ENCODE measurements at regions of chr2 and their contacts with region 1.

Region 1: GRCh38 chr2:152335010-152335725 is at the start of gene FMNL2:
- DNase-seq: peak; percentile 24
- ATAC-seq: peak; percentile 90
- H3K4me3 ChIP-seq: peak within 1 kb of the TSS; percentile 76
- H3K27ac ChIP-seq: peak within 1 kb of the TSS; percentile 35; the same call in 1 of the 2 replicates
- H3K4me1 ChIP-seq: no peaks in the 10 kb centered on the region
- H3K27me3 ChIP-seq: no peaks in the 10 kb centered on the region
- CTCF ChIP-seq: 0 out of 6 replicates have a peak, but pooled peaks of 1 of the 3 experiments have one; percentile 5
- EP300 ChIP-seq: no peak
- POLR2A ChIP-seq: 0 out of 2 replicates have a peak, but pooled peaks have one; percentile 67
- RAD21 ChIP-seq: no peak
- polyA plus RNA-seq, gene FMNL2: 0.13 to 0.19 TPM

Region 2: GRCh38 chr2:152036611-152037469 is 298.3 kb before region 1 on chr2:
- CTCF ChIA-PET with region 1: no interaction called
- POLR2A ChIA-PET with region 1: no interaction called
- RAD21 ChIA-PET with region 1: no interaction called
- SMC1A ChIA-PET with region 1: no interaction called
- in situ Hi-C with region 1: loop called (anchors 10 kb)
- intact Hi-C with region 1: loop called (anchors 5 kb)
- DNase-seq: no peak
- ATAC-seq: peak; percentile 97
- H3K4me3 ChIP-seq: no peak overlapping the region
- H3K27ac ChIP-seq: no peak overlapping the region
- H3K4me1 ChIP-seq: no peaks in the 10 kb centered on the region
- H3K27me3 ChIP-seq: no peaks in the 10 kb centered on the region
- CTCF ChIP-seq: peak; percentile 78 to 89 (median 80)
- EP300 ChIP-seq: no peak
- POLR2A ChIP-seq: no peak
- RAD21 ChIP-seq: peak; percentile 99

Region 3: DNA sequence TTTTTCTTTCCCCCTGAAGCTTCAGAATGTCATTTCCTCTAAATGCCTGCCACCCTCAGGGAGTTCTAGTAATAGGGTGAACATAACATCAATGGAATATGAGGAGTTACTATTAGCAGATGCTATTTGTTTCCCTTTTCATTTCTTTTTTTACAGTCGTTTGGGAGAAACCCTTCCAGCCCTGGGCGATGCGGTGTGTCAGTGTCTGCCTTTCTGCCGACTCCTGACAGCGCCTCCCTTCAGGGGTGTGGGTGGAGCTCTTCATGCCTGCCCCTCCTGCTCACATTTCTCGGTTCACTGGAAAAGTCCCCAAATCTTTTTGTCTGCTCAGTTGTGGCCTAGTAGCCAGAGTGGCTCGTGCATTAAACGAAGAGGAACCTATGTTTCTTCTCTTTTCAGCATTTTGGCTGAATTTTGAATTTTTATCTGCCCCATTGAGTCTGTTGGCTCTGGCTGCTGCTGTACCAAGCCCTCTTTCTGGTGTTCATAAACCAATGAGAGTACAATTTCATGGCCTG is 72.1 kb after region 1 on chr2:
- CTCF ChIA-PET with region 1: interaction called, 13 read pairs
- POLR2A ChIA-PET with region 1: interaction called, 3 read pairs
- RAD21 ChIA-PET with region 1: interaction called, 17 read pairs
- SMC1A ChIA-PET with region 1: interaction called, 21 read pairs
- in situ Hi-C with region 1: no loop called
- intact Hi-C with region 1: loop called (anchors 2 kb)
- DNase-seq: peak; percentile 55
- ATAC-seq: peak; percentile 95
- H3K4me3 ChIP-seq: peak overlapping the region; percentile 20; the same call in 1 of the 2 replicates
- H3K27ac ChIP-seq: peak overlapping the region; percentile 77
- H3K4me1 ChIP-seq: peaks cover 18% of the 10 kb centered on the region
- H3K27me3 ChIP-seq: no peaks in the 10 kb centered on the region
- CTCF ChIP-seq: 0 out of 6 replicates have a peak, but pooled peaks of 1 of the 3 experiments have one; percentile 1
- EP300 ChIP-seq: 0 out of 4 replicates have a peak, but pooled peaks of 1 of the 2 experiments have one; percentile 32
- POLR2A ChIP-seq: peak; percentile 50; the same call in 1 of the 2 replicates
- RAD21 ChIP-seq: no peak

Region 4: DNA sequence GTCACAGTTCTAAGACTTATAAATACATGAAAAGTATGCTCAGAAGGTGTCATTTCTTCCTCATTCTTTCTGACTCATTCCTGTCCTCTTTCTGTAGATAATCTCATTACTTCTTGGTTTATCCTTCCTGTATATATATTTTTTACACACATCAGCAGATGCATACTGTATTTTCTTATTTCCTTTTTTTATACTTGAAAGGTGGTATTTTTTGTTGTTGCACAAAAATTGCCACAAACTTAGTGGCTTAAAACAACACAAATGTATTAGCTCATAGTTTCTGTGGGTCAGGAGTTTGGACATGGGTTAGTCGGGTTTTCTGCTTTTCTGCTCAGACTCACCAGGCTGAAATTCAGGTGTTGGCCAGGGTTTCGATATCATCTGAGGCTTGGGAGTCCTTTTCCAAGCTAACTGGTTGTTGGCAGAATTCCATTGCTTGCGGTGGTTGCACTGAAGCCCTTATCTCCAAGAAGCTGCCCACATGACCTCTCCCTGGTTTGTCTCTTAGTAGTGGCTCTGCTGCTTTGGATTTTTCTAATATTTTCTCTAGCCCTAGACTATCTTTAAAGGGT is 162.4 kb after region 1 on chr2:
- CTCF ChIA-PET with region 1: interaction called, 3 read pairs
- POLR2A ChIA-PET with region 1: no interaction called
- RAD21 ChIA-PET with region 1: interaction called, 3 read pairs
- SMC1A ChIA-PET with region 1: interaction called, 4 read pairs
- in situ Hi-C with region 1: no loop called
- intact Hi-C with region 1: loop called (anchors 5 kb)
- DNase-seq: no peak
- ATAC-seq: peak; percentile 76
- H3K4me3 ChIP-seq: 0 out of 2 replicates have a peak overlapping the region, but pooled peaks have one; percentile 20
- H3K27ac ChIP-seq: no peak overlapping the region
- H3K4me1 ChIP-seq: peaks cover 24% of the 10 kb centered on the region
- H3K27me3 ChIP-seq: no peaks in the 10 kb centered on the region
- CTCF ChIP-seq: no peak
- EP300 ChIP-seq: 0 out of 4 replicates have a peak, but pooled peaks of 1 of the 2 experiments have one; percentile 39
- POLR2A ChIP-seq: no peak
- RAD21 ChIP-seq: no peak

Region 5: DNA sequence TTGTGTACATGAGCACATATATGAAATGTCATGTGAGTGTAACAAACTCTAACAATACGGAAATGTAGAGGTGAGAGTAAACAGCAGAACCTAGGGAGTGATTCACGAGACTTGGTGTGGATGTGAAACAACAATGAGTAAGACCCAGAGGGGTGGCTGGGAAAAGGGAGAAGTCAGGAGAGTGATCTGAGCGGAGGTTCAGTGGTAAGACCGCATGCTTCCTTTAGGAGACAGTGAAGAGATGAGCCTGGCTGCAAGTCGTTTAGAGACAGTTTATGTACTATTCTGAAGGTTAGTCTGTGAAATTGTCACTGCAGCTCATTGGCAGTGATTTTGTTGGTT is 231.5 kb after region 1 on chr2:
- CTCF ChIA-PET with region 1: no interaction called
- POLR2A ChIA-PET with region 1: no interaction called
- RAD21 ChIA-PET with region 1: no interaction called
- SMC1A ChIA-PET with region 1: interaction called, 3 read pairs
- in situ Hi-C with region 1: no loop called
- intact Hi-C with region 1: loop called (anchors 5 kb)
- DNase-seq: peak; percentile 64
- ATAC-seq: peak; percentile 54
- H3K4me3 ChIP-seq: no peak overlapping the region
- H3K27ac ChIP-seq: peak overlapping the region; percentile 65
- H3K4me1 ChIP-seq: peaks cover 28% of the 10 kb centered on the region
- H3K27me3 ChIP-seq: no peaks in the 10 kb centered on the region
- CTCF ChIP-seq: no peak
- EP300 ChIP-seq: 0 out of 4 replicates have a peak, but pooled peaks of 1 of the 2 experiments have one; percentile 45
- POLR2A ChIP-seq: no peak
- RAD21 ChIP-seq: no peak

Measured in GM12878 (cell line).